ENCODE measurements at regions of chr11 and their contacts with region 1.

Region 1: DNA sequence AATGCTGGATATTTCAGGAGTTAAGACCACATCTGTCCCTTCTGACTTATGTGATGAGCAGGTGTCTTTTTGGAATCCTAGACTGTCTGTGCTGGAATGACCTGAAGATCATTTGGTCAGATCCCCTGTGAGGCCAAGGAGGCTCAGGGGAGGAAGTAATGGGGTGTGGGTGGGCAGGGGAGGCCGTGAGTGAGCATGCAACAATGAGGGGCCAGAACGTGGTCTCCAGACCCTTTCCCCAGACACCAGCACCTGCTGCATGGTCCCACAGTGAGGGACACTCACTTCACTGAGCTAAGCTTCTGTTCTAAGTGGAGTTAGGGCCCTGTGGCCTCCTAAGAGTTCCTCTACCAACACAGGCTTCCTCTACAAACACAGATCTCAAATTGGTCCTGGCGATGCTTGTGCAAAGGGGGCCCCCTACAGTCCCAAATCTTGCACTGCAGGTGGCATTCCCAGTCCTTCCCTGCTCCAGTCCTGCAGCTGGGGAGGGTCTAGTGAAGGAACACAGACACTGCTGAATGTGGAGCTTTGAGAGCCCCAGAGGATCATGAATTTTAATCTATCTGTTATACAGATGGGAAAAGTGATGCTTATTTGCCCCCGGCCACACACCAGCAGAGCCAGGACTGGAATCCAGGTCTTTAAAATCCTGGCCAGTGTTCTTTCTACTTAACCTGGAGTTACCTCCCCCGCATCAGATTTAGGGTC is 7.4 kb downstream of the USP2 start:
- DNase-seq: peak; percentile 81
- H3K4me3 Mint-ChIP-seq: no peak overlapping the region
- H3K27ac Mint-ChIP-seq: no peak overlapping the region
- H3K4me1 Mint-ChIP-seq: peaks cover 48% of the 10 kb centered on the region
- H3K27me3 Mint-ChIP-seq: no peaks in the 10 kb centered on the region
- CTCF ChIP-seq: peak; percentile 96

Region 2: DNA sequence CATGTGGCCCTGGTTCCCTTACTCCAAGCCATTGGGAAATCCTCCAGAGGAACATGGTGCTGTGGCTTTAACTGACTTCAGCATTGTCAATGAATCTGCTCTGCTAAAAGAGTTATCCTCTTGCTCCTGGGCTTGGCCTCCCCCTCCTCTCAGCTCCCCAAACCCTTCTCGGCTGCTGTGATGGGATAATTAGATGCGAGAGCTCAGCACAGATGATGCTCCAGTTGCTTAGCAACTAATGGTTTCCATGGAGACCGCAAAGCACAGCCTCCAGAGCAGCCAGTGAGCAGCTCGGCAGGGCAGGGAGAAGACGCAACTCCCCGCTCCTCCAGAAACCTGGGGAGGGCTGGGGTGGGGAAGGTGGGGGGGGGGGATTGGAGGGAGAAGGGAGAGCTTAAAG is 420.8 kb before region 1 on chr11:
- CTCF ChIA-PET with region 1: no interaction called
- POLR2A ChIA-PET with region 1: no interaction called
- intact Hi-C with region 1: no loop called
- DNase-seq: no peak
- H3K4me3 Mint-ChIP-seq: no peak overlapping the region
- H3K27ac Mint-ChIP-seq: no peak overlapping the region
- H3K4me1 Mint-ChIP-seq: peaks cover 8% of the 10 kb centered on the region
- H3K27me3 Mint-ChIP-seq: peaks cover 12% of the 10 kb centered on the region
- CTCF ChIP-seq: no peak

Region 3: DNA sequence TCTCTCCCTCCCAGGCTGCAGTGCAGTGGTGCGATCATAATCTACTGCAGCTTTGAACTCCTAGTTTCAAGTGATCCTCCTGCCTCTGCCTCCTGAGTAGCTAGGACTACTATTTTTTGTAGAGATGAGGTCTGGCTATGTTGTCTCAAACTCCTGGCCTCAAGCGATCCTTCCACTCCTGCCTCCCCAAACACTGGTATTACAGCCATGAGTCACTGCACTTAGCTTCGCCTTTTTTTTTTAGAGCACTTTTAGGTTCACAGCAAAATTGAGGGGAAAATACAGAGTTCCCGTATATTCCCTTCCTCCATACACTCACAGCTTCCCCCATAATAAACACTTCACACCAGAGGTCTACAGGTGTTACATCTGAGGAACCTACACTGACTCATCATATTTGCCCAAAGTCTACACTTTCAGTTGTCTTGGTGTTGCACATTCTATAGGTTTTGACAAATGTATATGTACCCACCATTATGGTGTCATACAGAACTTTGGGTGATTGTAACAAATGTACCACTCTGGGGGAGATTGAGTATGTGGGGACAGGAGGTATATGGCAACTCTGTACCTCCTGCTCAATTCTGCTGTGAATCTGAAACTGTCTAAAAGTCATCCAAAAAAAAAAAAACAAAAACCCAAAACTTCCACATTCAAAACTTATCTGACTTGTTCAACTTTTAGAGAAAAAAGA is 332.1 kb before region 1 on chr11:
- CTCF ChIA-PET with region 1: no interaction called
- POLR2A ChIA-PET with region 1: no interaction called
- intact Hi-C with region 1: no loop called
- DNase-seq: no peak
- H3K4me3 Mint-ChIP-seq: no peak overlapping the region
- H3K27ac Mint-ChIP-seq: no peak overlapping the region
- H3K4me1 Mint-ChIP-seq: no peaks in the 10 kb centered on the region
- H3K27me3 Mint-ChIP-seq: no peaks in the 10 kb centered on the region
- CTCF ChIP-seq: no peak

Region 4: GRCh38 chr11:119205574-119206510 is 168.2 kb before region 1 on chr11 and contains the start of gene CBL:
- CTCF ChIA-PET with region 1: interaction called, 25 read pairs
- POLR2A ChIA-PET with region 1: interaction called, 3 read pairs
- intact Hi-C with region 1: loop called (anchors 2 kb)
- DNase-seq: peak; percentile 91
- H3K4me3 Mint-ChIP-seq: peak within 1 kb of the TSS; percentile 92
- H3K27ac Mint-ChIP-seq: peak within 1 kb of the TSS; percentile 68
- H3K4me1 Mint-ChIP-seq: peaks cover 6% of the 10 kb centered on the region
- H3K27me3 Mint-ChIP-seq: no peaks in the 10 kb centered on the region
- CTCF ChIP-seq: peak; percentile 90
- total RNA-seq, gene CBL: 35.5 and 45.7 TPM in 2 replicates

Region 5: GRCh38 chr11:119334174-119334930 is 39.7 kb before region 1 on chr11 and contains the start of gene RNF26:
- CTCF ChIA-PET with region 1: interaction called, 49 read pairs
- POLR2A ChIA-PET with region 1: interaction called, 5 read pairs
- intact Hi-C with region 1: no loop called
- DNase-seq: peak; percentile 99
- H3K4me3 Mint-ChIP-seq: peak within 1 kb of the TSS; percentile 86
- H3K27ac Mint-ChIP-seq: peak within 1 kb of the TSS; percentile 89
- H3K4me1 Mint-ChIP-seq: peaks cover 30% of the 10 kb centered on the region
- H3K27me3 Mint-ChIP-seq: peaks cover 16% of the 10 kb centered on the region
- CTCF ChIP-seq: no peak
- total RNA-seq, gene RNF26: 19.2 and 20.9 TPM in 2 replicates

Region 6: DNA sequence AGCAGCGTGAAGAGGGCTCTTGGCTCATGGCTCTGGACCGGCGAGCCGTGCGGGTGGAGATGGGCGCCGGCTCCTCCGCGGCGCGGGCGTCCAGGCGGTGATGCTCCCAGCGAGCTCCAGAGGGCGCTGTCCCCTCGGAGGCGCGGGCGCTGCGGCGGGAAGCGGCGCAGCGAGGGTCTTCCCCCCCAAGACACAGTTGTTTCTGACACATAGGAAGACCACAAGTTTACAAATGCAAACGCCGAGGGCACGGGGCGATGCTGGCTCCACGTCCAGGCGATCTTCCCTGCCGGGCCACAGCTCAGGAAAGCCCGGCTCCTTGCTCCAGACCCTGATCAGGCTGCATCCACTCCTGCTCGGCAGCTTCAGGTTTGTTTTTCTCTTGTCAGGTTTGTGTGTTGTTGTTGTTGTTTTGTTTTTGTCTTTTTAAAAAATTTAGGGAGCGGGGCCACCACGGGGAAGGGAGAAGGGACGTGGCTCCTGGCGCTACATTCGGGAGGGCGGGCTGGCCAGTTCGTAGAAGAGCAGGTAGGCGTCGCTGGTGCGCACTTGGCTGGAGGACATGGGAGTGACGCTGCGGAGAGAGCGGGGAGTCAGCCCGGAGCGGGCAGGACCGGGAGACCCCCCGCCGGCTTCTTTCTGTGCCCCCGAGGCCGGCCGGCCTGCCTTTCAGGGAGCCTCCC is 17.6 kb before region 1 on chr11:
- CTCF ChIA-PET with region 1: interaction called, 415 read pairs
- POLR2A ChIA-PET with region 1: interaction called, 85 read pairs
- intact Hi-C with region 1: loop called (anchors 1 kb)
- DNase-seq: peak; percentile 80
- H3K4me3 Mint-ChIP-seq: peak overlapping the region; percentile 79
- H3K27ac Mint-ChIP-seq: no peak overlapping the region
- H3K4me1 Mint-ChIP-seq: peaks cover 41% of the 10 kb centered on the region
- H3K27me3 Mint-ChIP-seq: no peaks in the 10 kb centered on the region
- CTCF ChIP-seq: peak; percentile 92

Region 7: DNA sequence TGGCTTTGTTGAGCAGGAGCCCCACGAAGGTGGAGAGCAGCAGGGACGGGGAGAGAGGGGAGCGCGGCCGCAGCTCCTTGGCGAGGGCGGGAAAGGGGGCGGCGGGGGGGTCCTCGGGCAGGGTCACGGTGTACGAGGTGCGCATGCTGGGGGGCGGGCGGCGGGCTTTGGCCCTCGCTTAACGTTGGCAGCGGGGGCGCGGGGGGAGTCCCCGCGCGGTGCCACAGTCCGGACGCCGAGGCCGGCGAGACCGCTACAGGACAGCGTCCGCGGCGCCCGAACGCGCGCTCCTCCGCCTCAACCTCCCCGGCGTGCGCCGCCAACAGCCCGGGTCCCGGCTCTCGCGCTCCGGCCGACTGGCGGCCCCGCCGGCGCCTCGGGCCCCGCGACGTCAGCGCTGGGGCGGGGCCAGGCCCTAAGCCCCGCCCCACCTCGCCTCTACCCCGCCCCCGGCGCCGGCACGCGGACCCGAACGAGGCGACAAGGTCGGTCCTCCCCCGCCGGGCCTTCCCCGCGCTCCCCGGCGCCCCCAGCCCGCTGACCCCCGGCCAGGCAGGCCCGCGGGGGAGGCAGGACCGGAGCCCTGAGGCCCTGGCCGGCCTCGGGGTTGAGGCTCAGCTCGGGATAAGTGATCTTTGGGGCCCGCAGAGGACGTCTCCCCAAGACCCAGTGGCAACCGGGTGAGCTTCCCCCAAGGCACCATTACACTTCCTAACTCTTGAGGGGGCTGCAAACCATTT is 10.1 kb before region 1 on chr11:
- CTCF ChIA-PET with region 1: interaction called, 415 read pairs
- POLR2A ChIA-PET with region 1: interaction called, 85 read pairs
- intact Hi-C with region 1: loop called (anchors 1 kb)
- DNase-seq: no peak
- H3K4me3 Mint-ChIP-seq: no peak overlapping the region
- H3K27ac Mint-ChIP-seq: no peak overlapping the region
- H3K4me1 Mint-ChIP-seq: peaks cover 73% of the 10 kb centered on the region
- H3K27me3 Mint-ChIP-seq: no peaks in the 10 kb centered on the region
- CTCF ChIP-seq: no peak

Region 8: DNA sequence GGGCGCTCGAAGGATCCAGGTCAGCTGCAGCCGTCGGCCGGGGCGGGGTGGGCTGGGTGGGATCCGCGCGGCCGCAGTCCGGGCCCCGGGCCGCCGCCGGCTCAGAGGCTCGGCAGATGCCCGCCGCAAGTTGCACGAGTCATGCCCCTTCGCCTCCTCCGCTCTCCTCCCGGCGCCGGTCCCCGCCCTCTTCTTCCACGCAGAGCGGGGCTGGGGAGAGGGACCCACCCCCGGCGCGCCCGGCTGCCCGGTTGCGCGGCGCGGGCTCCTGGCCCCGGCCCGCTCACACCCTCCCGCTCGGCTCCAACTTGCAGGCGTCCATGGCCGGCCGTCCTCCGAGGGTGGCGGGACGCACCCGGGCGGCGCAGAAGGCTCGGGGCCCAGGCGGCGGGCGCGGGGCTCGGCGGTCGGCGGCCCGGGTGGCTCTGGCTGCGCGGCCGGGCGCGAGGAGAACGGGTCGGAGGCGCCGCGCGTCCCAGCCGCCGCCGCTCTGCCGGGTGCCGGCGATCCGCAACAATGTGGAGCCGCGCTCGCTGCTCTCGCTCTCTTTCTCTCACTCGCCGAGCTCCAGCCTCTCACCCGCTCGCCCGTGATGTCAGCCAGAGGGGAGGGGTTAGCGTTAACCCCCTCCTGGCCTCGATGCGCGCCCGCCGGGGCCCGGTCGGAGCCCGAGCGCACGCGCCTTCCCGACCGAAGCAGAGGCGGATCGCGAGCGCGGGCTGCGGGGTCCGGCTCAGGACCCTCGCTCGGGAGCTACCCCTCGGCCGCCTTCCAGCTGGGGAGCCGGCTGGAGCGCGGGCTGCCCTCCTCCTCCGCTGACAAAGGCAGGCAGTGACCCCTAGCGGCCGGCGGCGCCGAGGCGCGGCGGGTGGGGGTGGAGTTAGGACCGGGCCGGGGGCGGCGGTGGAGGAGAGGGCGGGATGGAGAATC is 354.8 kb after region 1 on chr11 and contains the start of gene NECTIN1:
- CTCF ChIA-PET with region 1: no interaction called
- POLR2A ChIA-PET with region 1: no interaction called
- intact Hi-C with region 1: no loop called
- DNase-seq: peak; percentile 83
- H3K4me3 Mint-ChIP-seq: peak within 1 kb of the TSS; percentile 81
- H3K27ac Mint-ChIP-seq: peak within 1 kb of the TSS; percentile 69
- H3K4me1 Mint-ChIP-seq: peaks cover 16% of the 10 kb centered on the region
- H3K27me3 Mint-ChIP-seq: no peaks in the 10 kb centered on the region
- CTCF ChIP-seq: peak; percentile 96
- total RNA-seq, gene NECTIN1: 59.2 and 78.6 TPM in 2 replicates

Measured in MCF 10A (cell line).